Heart left ventricle (tissue), 16 donors: ENCODE measurements at regions of chr12 and their contacts with region 1.

Region 1: DNA sequence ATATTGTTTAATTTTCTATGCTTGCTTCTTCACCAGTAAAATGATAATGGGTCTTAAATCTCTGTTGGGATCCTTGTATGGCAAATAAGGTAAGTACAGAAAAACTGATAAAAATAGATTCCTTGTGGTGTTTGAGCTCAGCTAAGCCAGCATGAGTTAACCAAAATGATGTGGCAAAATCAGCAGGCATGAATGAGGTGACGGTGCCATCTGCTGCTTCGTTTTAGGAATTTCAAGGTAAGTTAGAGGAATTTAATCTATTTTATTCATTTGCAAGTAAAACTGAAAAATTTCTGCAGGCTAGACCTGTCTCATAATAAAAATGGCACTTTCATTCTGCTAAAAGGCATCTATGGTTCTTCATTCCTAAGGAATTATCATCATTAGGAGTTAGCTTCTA is 10.0 kb upstream of the CLEC7A start:
- DNase-seq: peak in 3 of 5 donors; percentile 29 to 34 (median 33)
- ATAC-seq: peak in 2 of 4 donors; percentile 60 to 62
- H3K4me3 ChIP-seq: no peak overlapping the region
- H3K27ac ChIP-seq: no peak overlapping the region
- H3K4me1 ChIP-seq: peaks cover 0 to 11% (median 6%) of the 10 kb centered on the region in 12 donors
- H3K27me3 ChIP-seq: no peaks in the 10 kb centered on the region
- CTCF ChIP-seq: peak in 11 of 12 donors; percentile 43 to 72 (median 67)
- POLR2A ChIP-seq: no peak

Region 2: GRCh38 chr12:9273276-9273675 is 866.7 kb before region 1 on chr12:
- intact Hi-C with region 1: no loop called
- DNase-seq: no peak
- ATAC-seq: no peak
- H3K4me3 ChIP-seq: no peak overlapping the region
- H3K27ac ChIP-seq: no peak overlapping the region
- H3K4me1 ChIP-seq: no peaks in the 10 kb centered on the region
- H3K27me3 ChIP-seq: no peaks in the 10 kb centered on the region
- CTCF ChIP-seq: no peak
- POLR2A ChIP-seq: no peak

Region 3: DNA sequence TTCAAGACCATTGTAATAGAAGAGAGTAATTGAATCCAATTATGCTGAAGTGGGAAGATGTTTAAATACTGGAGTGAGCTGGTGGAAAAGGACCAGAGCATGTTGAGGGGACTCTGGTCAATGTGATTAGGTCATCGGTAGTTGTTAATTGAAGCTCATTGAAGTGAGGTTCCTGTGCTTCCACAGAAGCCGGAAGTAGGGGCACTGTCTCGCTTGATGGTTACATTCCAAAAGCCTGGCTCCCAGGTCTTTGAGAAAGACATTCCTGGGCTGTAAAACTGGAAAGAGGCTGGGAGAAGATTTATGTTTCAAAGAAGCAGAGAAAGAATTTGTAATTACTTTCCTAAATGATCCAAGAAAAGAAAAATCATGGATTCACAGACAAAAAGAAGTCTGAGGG is 394.8 kb before region 1 on chr12:
- intact Hi-C with region 1: loop called in 8 of 10 experiments (anchors 2 to 5 kb)
- DNase-seq: no peak
- ATAC-seq: no peak
- H3K4me3 ChIP-seq: no peak overlapping the region
- H3K27ac ChIP-seq: no peak overlapping the region
- H3K4me1 ChIP-seq: peaks cover 0 to 30% (median 5%) of the 10 kb centered on the region in 12 donors
- H3K27me3 ChIP-seq: no peaks in the 10 kb centered on the region
- CTCF ChIP-seq: no peak
- POLR2A ChIP-seq: no peak

Region 4: GRCh38 chr12:9750276-9751203 is 389.5 kb before region 1 on chr12:
- intact Hi-C with region 1: loop called in 8 of 10 experiments (anchors 2 to 5 kb)
- DNase-seq: peak in 3 of 5 donors; percentile 29 to 51 (median 34)
- ATAC-seq: peak in 3 of 4 donors; percentile 70 to 95 (median 88)
- H3K4me3 ChIP-seq: peak overlapping the region in 7 of 12 donors; percentile 10 to 29 (median 22)
- H3K27ac ChIP-seq: no peak overlapping the region
- H3K4me1 ChIP-seq: peaks cover 0 to 14% (median 0%) of the 10 kb centered on the region in 12 donors
- H3K27me3 ChIP-seq: no peaks in the 10 kb centered on the region
- CTCF ChIP-seq: peak; percentile 78 to 90 (median 84)
- POLR2A ChIP-seq: no peak

Region 5: GRCh38 chr12:10012630-10013330 is 127.2 kb before region 1 on chr12:
- intact Hi-C with region 1: loop called in 1 of 10 experiments (anchors 5 kb)
- DNase-seq: no peak
- ATAC-seq: no peak
- H3K4me3 ChIP-seq: no peak overlapping the region
- H3K27ac ChIP-seq: no peak overlapping the region
- H3K4me1 ChIP-seq: peaks cover 0 to 4% (median 0%) of the 10 kb centered on the region in 12 donors
- H3K27me3 ChIP-seq: peaks cover 0 to 6% (median 0%) of the 10 kb centered on the region in 9 donors
- CTCF ChIP-seq: no peak
- POLR2A ChIP-seq: no peak

Region 6: GRCh38 chr12:10033783-10034545 is 106.0 kb before region 1 on chr12:
- intact Hi-C with region 1: loop called (anchors 1 to 5 kb)
- DNase-seq: no peak
- ATAC-seq: no peak
- H3K4me3 ChIP-seq: no peak overlapping the region
- H3K27ac ChIP-seq: peak overlapping the region in 1 of 12 donors; percentile 46
- H3K4me1 ChIP-seq: peaks cover 0 to 5% (median 0%) of the 10 kb centered on the region in 12 donors
- H3K27me3 ChIP-seq: no peaks in the 10 kb centered on the region
- CTCF ChIP-seq: peak in 11 of 12 donors; percentile 40 to 77 (median 59)
- POLR2A ChIP-seq: no peak